ENCODE measurements at regions of chr10 and their contacts with region 1.

Region 1: DNA sequence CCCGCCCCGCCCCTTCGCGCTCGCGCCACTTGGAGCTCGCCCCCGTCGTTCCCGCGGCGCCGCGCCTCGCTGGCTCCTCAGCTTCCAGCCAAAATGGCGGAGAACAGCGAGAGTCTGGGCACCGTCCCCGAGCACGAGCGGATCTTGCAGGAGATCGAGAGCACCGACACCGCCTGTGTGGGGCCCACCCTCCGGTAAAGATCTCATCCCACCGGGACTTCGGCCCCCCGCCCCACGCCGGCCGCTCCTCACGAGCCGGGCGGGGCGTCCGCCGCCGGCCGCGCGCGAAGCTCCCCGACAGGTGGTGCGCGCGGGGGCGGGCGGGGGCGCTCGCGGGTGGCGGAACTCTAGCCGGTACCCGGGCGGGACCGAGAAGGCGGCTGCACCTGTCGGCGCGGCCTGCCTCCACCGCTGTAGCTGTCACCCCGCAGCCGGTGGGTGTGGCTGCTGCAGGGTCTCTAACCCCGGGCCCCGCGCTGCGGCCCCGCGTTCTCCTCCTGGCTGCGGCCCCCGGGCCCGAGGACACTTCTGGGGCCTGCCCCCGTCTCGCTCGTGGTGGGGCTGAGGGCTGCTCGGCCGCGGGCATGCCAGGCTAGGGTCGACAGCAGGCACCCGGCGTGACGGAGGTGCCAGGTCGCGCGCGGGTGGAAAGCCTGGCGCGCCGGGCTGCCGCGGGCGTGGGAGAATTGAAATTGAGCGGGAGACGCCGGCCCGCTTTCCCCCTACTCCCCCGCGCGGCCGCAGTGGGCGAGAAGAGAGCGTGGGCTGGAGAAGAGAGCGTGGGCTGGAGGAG is at the start of gene EXOC6:
- DNase-seq: peak; percentile 66 to 87
- H3K4me3 ChIP-seq: peak within 1 kb of the TSS; percentile 97 to 98
- H3K27ac ChIP-seq: peak within 1 kb of the TSS; percentile 76 to 78
- H3K4me1 ChIP-seq: peaks cover 0 to 11% (median 9%) of the 10 kb centered on the region in 4 donors
- H3K27me3 ChIP-seq: no peaks in the 10 kb centered on the region
- CTCF ChIP-seq: no peak

Region 2: GRCh38 chr10:92592761-92593618 is 255.6 kb before region 1 on chr10 and contains the start of gene KIF11:
- intact Hi-C with region 1: loop called (anchors 5 kb)
- DNase-seq: peak; percentile 99
- H3K4me3 ChIP-seq: peak within 1 kb of the TSS; percentile 60 to 65
- H3K27ac ChIP-seq: peak within 1 kb of the TSS; percentile 90 to 92
- H3K4me1 ChIP-seq: peaks cover 0 to 18% (median 10%) of the 10 kb centered on the region in 4 donors
- H3K27me3 ChIP-seq: no peaks in the 10 kb centered on the region
- CTCF ChIP-seq: no peak